ENCODE measurements at regions of chr1 and their contacts with region 1.

Region 1: GRCh38 chr1:160951443-160952128 is 3.0 kb downstream of the ITLN2 start:
- DNase-seq: peak; percentile 41
- ATAC-seq: peak; percentile 93
- H3K4me3 ChIP-seq: no peak overlapping the region
- H3K27ac ChIP-seq: no peak overlapping the region
- H3K4me1 ChIP-seq: no peaks in the 10 kb centered on the region
- H3K27me3 ChIP-seq: peaks cover 4% of the 10 kb centered on the region; the same call in 1 of the 2 replicates
- CTCF ChIP-seq: peak; percentile 61
- POLR2A ChIP-seq: no peak
- RAD21 ChIP-seq: peak; percentile 52

Region 2: DNA sequence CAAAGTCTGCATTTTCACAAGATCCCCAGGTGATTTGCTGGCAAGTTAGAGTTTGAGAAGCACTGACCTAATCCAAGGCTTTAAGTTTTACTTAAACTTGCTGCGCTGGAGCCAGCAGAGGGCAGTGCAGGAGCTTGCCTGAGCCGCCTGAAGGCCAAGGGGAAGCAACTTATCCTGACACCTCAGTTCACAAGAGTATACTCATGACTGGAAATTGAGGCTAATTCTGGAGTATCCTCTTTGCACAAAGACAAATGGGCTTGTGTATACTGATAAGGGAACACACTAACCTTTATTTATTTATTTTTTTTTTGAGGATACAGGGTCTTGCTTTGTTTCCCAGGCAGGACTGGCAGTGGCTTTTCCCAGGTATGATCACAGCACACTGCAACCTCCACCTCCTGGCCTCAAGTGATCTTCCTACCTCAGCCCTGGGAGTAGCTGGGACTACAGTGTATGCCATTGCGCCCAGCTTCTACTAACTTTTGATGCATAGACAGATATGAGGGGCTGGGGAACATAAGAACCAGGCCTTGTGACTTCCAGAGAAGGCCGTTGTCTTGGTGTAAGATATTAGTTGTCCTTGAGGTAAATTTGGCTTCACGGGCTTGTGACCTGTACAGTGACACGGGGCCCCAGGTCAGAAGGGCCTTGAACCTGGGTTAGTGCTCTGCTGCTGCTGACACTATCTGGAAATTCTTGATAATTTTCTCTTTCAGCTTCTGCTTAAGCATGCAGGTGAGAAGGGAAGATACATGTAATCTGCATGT is 275.8 kb before region 1 on chr1:
- CTCF ChIA-PET with region 1: no interaction called
- POLR2A ChIA-PET with region 1: no interaction called
- dilution Hi-C with region 1: no loop called
- in situ Hi-C with region 1: no loop called
- intact Hi-C with region 1: loop called (anchors 2 kb)
- DNase-seq: peak; percentile 51
- ATAC-seq: peak; percentile 92
- H3K4me3 ChIP-seq: no peak overlapping the region
- H3K27ac ChIP-seq: no peak overlapping the region
- H3K4me1 ChIP-seq: no peaks in the 10 kb centered on the region
- H3K27me3 ChIP-seq: no peaks in the 10 kb centered on the region; the same call in 1 of the 2 replicates
- CTCF ChIP-seq: peak; percentile 65
- POLR2A ChIP-seq: no peak
- RAD21 ChIP-seq: peak; percentile 60

Region 3: DNA sequence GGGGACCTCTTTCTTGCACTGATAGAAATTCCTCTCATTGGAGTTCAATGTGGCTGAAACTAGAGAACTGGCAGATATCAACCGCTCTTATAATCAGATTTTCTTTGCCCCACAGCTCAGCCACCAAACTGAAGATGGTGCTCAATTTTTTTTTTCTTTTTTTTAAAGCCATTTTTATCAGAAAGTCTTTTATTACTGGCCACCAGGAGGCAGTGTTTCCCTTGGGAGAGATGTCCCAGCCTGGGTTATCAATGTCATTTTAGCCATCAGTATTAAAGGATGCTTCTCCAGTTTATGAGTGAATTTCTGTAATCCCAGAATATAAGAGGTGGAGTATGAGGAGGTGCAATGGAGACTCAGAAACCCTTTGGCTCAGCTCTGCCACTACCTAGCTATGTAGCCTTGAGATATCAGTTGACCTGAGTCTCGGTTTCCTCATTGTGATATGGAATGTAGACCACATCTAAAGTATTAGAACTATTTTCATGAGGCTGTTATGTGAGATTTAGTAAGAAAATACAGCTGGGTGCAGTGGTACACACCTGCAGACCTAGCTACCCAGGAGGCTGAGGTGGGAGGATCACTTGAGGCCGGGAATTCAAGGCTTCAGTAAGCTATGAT is 116.5 kb before region 1 on chr1:
- CTCF ChIA-PET with region 1: interaction called, 4 read pairs
- POLR2A ChIA-PET with region 1: no interaction called
- dilution Hi-C with region 1: no loop called
- in situ Hi-C with region 1: no loop called
- intact Hi-C with region 1: loop called (anchors 1 kb)
- DNase-seq: peak; percentile 31
- ATAC-seq: no peak
- H3K4me3 ChIP-seq: no peak overlapping the region
- H3K27ac ChIP-seq: no peak overlapping the region
- H3K4me1 ChIP-seq: no peaks in the 10 kb centered on the region
- H3K27me3 ChIP-seq: peaks cover 8% of the 10 kb centered on the region
- CTCF ChIP-seq: peak; percentile 68
- POLR2A ChIP-seq: no peak
- RAD21 ChIP-seq: peak; percentile 61